Endothelial cell of umbilical vein (primary cell): ENCODE measurements at regions of chr11 and their contacts with region 1.

Region 1: DNA sequence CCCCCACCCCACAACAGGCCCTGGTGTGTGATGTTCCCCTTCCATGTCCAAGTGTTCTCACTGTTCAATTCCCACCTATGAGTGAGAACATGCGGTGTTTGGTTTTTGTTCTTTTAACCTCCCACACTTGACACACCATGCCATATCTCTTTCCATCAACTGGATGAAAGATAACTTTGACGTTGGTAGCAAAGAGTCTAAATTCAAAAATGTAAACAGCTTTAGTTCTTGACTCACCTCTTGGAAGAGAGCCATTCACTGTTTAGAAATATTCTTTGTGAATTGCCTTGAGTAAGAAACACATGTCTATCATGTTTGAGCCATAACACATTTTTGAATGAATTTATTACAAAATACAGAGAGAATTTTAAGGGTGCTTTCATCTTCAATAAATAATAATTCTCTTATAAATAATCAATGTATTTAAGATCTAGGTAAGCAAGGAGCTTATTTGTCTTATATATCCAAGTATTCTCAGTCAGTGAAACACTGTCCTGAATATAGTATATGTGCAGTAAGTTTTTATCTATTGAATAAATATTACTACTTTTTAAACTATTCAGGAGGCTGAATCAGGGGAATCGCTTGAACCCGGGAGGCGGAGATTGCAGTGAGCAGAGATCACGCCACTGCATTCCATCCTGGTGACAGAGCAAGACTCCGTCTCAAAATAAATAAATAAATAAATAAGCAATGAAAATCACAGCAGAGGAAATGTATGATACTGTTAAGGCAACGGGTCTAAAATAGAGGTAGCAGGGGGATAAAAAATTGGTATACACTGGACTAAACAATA is 6.7 kb downstream of the CARD18 start:
- DNase-seq: peak; percentile 78
- H3K4me3 ChIP-seq: no peak overlapping the region
- H3K27ac ChIP-seq: peak overlapping the region; percentile 20
- H3K4me1 ChIP-seq: peaks cover 2% of the 10 kb centered on the region
- H3K27me3 ChIP-seq: no peaks in the 10 kb centered on the region
- CTCF ChIP-seq: no peak
- POLR2A ChIP-seq: no peak

Region 2: GRCh38 chr11:105144887-105145286 is 12.0 kb after region 1 on chr11:
- CTCF ChIA-PET with region 1: no interaction called
- POLR2A ChIA-PET with region 1: no interaction called
- dilution Hi-C with region 1: no loop called
- intact Hi-C with region 1: loop called (anchors 1 kb)
- DNase-seq: peak; percentile 36
- H3K4me3 ChIP-seq: no peak overlapping the region
- H3K27ac ChIP-seq: no peak overlapping the region
- H3K4me1 ChIP-seq: peaks cover 22% of the 10 kb centered on the region
- H3K27me3 ChIP-seq: no peaks in the 10 kb centered on the region
- CTCF ChIP-seq: no peak
- POLR2A ChIP-seq: no peak